Activated CD4-positive, alpha-beta T cell treated with anti-CD3 and anti-CD28 coated beads for 36 hours (primary cell): ENCODE measurements at regions of chr9 and their contacts with region 1.

Region 1: GRCh38 chr9:111828193-111828592 is 33.5 kb upstream of the SHOC1 start:
- DNase-seq: no peak
- ATAC-seq: no peak
- H3K4me3 Mint-ChIP-seq: no peak overlapping the region
- H3K27ac Mint-ChIP-seq: no peak overlapping the region
- H3K4me1 Mint-ChIP-seq: no peaks in the 10 kb centered on the region
- H3K27me3 Mint-ChIP-seq: no peaks in the 10 kb centered on the region

Region 2: GRCh38 chr9:111857609-111858211 is 29.5 kb after region 1 on chr9:
- CTCF ChIA-PET with region 1: no interaction called
- POLR2A ChIA-PET with region 1: no interaction called
- intact Hi-C with region 1: no loop called
- DNase-seq: no peak
- ATAC-seq: no peak
- H3K4me3 Mint-ChIP-seq: no peak overlapping the region
- H3K27ac Mint-ChIP-seq: no peak overlapping the region
- H3K4me1 Mint-ChIP-seq: no peaks in the 10 kb centered on the region
- H3K27me3 Mint-ChIP-seq: no peaks in the 10 kb centered on the region

Region 3: GRCh38 chr9:112074250-112075008 is 246.2 kb after region 1 on chr9:
- CTCF ChIA-PET with region 1: interaction called, 4 read pairs
- POLR2A ChIA-PET with region 1: no interaction called
- intact Hi-C with region 1: loop called (anchors 1 to 2 kb)
- DNase-seq: peak; percentile 81
- ATAC-seq: peak; percentile 85
- H3K4me3 Mint-ChIP-seq: no peak overlapping the region
- H3K27ac Mint-ChIP-seq: peak overlapping the region; percentile 72
- H3K4me1 Mint-ChIP-seq: peaks cover 35% of the 10 kb centered on the region
- H3K27me3 Mint-ChIP-seq: peaks cover 4% of the 10 kb centered on the region